SK-N-SH (cell line): ENCODE measurements at regions of chr4 and their contacts with region 1.

Region 1: DNA sequence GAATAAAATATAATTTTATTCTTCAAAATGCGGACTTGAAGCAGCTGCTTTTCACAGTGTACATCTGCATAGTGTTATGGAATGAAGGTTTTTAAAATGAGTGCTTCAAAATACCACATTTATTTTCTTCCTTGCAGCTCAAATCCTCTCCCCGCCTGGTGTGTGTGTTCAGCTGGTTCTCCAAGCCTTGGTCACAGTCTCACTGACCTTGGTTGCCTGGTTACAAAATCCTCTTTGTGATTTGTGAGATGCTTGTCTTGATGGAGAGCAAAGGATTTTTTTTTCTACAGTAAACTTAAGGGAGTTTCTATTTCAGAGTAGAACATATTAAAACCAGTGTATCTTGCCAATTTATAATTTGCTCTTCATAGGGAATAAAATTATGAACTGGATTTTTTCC is 139.2 kb downstream of the PCDH18 start:
- DNase-seq: peak; percentile 28
- H3K4me3 ChIP-seq: no peak overlapping the region
- H3K27ac ChIP-seq: peak overlapping the region in 1 of 2 experiments; percentile 99; a peak in 2 of 4 replicates
- H3K4me1 ChIP-seq: peaks cover 27 to 41% of the 10 kb centered on the region in 2 experiments; a peak in 3 of 4 replicates
- H3K27me3 ChIP-seq: no peaks in the 10 kb centered on the region
- CTCF ChIP-seq: no peak
- EP300 ChIP-seq: no peak
- RAD21 ChIP-seq: no peak

Region 2: DNA sequence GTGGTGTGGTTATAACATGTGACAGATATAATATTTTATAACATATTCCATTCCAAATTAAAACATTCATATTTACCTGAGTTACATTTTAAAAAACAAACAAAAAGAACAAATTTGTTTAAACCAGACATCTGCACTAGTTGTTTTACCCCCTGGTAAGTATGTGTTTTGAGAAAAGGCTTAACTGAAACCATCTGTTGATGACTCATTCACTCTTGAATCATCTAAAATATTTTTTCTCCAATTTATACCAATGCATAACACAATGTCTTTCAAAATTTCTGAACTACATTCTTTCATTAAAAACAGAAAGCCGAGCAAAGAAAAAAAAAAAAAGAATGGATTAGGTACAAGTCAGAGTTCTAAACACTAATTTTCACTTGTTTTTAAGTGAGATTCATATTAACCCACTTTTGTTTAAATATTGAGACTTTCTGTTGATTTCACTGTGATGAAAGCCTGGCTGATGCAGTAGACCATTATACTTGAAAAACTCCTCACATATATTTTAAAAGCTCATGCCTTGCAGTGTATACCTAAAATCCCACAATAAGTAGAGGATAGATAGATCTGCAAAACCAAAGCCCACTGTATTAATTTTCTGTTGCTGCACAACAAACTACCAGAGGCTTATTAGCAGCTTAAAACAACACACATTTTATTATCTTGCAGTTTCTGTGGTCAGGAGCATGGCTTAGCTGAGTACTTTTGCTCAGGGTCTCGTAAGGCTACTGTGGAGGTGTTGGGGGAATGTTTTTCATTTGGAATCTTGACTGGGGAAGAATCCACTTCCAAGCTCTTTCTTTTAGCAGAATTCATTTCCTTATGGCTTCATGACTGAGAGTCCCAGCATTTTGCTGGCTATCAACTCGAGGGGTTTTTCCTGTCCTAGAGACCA is 82.2 kb before region 1 on chr4:
- CTCF ChIA-PET with region 1: no interaction called
- POLR2A ChIA-PET with region 1: no interaction called
- DNase-seq: peak; percentile 3
- H3K4me3 ChIP-seq: no peak overlapping the region
- H3K27ac ChIP-seq: peak overlapping the region; percentile 82 to 87
- H3K4me1 ChIP-seq: peaks cover 5 to 31% of the 10 kb centered on the region in 2 experiments
- H3K27me3 ChIP-seq: no peaks in the 10 kb centered on the region
- CTCF ChIP-seq: no peak
- EP300 ChIP-seq: peak in 1 of 2 experiments; percentile 91; a peak in 2 of 4 replicates
- RAD21 ChIP-seq: no peak

Region 3: DNA sequence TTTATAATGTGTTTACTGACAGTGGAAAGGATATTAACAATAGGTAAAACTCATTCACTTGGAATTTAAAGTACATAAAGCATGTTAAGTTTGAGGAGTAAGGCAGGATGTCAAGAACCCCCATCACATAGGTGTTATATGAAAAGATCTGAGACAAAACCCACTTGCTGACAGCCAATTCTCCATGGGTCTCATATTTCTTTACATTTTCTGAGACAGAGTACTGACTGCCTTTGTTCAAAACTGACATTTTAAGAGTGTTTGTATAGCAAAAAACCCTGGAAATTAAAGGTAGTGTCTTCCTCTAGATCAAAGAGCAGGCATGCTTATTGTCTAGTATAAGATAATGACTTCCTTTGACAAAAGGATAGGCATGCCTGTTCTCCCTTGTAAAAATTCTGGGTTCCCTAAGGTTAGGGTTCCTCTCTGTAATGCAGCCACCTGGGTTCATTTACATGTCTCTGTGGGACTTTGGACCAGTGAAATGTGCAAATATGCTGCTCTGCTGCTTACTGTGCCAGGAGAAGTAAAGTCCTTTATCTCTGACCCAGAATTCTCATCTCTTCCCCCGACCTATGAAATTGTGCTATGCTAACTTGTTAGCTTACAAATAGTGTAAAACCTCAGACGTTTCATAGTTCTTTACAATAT is 15.6 kb after region 1 on chr4:
- CTCF ChIA-PET with region 1: no interaction called
- POLR2A ChIA-PET with region 1: no interaction called
- DNase-seq: no peak
- H3K4me3 ChIP-seq: no peak overlapping the region
- H3K27ac ChIP-seq: no peak overlapping the region
- H3K4me1 ChIP-seq: no peaks in the 10 kb centered on the region
- H3K27me3 ChIP-seq: no peaks in the 10 kb centered on the region
- CTCF ChIP-seq: no peak
- EP300 ChIP-seq: no peak
- RAD21 ChIP-seq: no peak

Region 4: GRCh38 chr4:137474711-137475301 is 81.8 kb after region 1 on chr4:
- CTCF ChIA-PET with region 1: interaction called, 14 read pairs
- POLR2A ChIA-PET with region 1: interaction called, 3 read pairs
- DNase-seq: peak; percentile 62
- H3K4me3 ChIP-seq: no peak overlapping the region
- H3K27ac ChIP-seq: peak overlapping the region in 1 of 2 experiments; percentile 98; a peak in 2 of 4 replicates
- H3K4me1 ChIP-seq: peaks cover 4 to 21% of the 10 kb centered on the region in 2 experiments; a peak in 3 of 4 replicates
- H3K27me3 ChIP-seq: no peaks in the 10 kb centered on the region
- CTCF ChIP-seq: no peak
- EP300 ChIP-seq: peak in 1 of 2 experiments; percentile 97; a peak in 2 of 4 replicates
- RAD21 ChIP-seq: peak; percentile 40

Region 5: GRCh38 chr4:137531986-137532868 is 139.2 kb after region 1 on chr4 and contains the start of gene PCDH18:
- CTCF ChIA-PET with region 1: interaction called, 5 read pairs
- POLR2A ChIA-PET with region 1: interaction called, 12 read pairs
- DNase-seq: peak; percentile 59
- H3K4me3 ChIP-seq: peak within 1 kb of the TSS; percentile 88 to 93
- H3K27ac ChIP-seq: peak within 1 kb of the TSS; percentile 89 to 99
- H3K4me1 ChIP-seq: peaks cover 19 to 26% of the 10 kb centered on the region in 2 experiments; a peak in 3 of 4 replicates
- H3K27me3 ChIP-seq: no peaks in the 10 kb centered on the region
- CTCF ChIP-seq: no peak
- EP300 ChIP-seq: peak in 1 of 2 experiments; percentile 25; a peak in 1 of 4 replicates
- RAD21 ChIP-seq: no peak
- polyA plus RNA-seq, gene PCDH18: 25.0 and 37.5 TPM in 2 replicates